ENCODE measurements at regions of chrX and their contacts with region 1.

Region 1: DNA sequence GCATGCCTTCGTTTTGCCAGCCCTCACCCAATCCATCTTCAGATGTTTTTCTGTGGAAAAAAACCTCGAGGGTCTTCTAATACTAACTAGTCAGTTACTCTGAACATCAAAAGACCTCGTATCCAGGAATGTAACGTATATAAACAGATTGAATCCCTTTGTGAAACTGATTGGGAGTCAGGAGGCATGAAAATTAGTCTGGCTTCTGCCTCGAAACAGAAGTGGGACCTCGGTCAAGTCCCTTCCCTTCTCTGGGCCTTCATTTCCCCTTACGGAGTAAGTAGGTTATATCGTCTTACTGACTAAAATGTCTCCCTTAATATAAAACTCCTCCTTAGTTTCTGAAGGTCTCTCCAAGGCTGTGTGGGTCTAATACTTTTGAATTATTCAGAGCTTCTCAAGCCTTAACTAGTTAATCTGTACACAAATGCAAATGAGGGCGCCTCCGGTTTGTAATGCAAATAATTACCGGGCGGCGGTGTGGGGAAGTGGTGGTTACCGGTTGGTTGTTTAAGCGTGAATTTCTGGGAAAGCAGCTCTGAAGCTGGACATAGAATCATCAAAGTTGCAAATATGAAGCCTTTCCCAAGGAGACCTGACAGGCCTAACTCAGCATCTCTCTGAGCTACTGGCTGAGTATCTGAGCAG is 11.4 kb upstream of the NKRF start:
- DNase-seq: no peak
- ATAC-seq: peak; percentile 76
- H3K4me3 ChIP-seq: peak overlapping the region; percentile 29; the same call in 1 of the 2 replicates
- H3K27ac ChIP-seq: peak overlapping the region; percentile 54
- H3K4me1 ChIP-seq: peaks cover 30% of the 10 kb centered on the region
- H3K27me3 ChIP-seq: no peaks in the 10 kb centered on the region
- CTCF ChIP-seq: no peak
- EP300 ChIP-seq: no peak
- POLR2A ChIP-seq: 0 out of 2 replicates have a peak, but pooled peaks have one; percentile 4
- RAD21 ChIP-seq: no peak

Region 2: GRCh38 chrX:119638725-119639471 is 21.3 kb after region 1 on chrX:
- CTCF ChIA-PET with region 1: interaction called, 20 read pairs
- POLR2A ChIA-PET with region 1: interaction called, 6 read pairs
- RAD21 ChIA-PET with region 1: interaction called, 99 read pairs
- SMC1A ChIA-PET with region 1: interaction called, 37 read pairs
- in situ Hi-C with region 1: no loop called
- intact Hi-C with region 1: loop called (anchors 2 kb)
- DNase-seq: peak; percentile 81
- ATAC-seq: peak; percentile 84
- H3K4me3 ChIP-seq: no peak overlapping the region
- H3K27ac ChIP-seq: peak overlapping the region; percentile 67
- H3K4me1 ChIP-seq: peaks cover 61% of the 10 kb centered on the region
- H3K27me3 ChIP-seq: no peaks in the 10 kb centered on the region
- CTCF ChIP-seq: 0 out of 6 replicates have a peak, but pooled peaks of 1 of the 3 experiments have one; percentile 10
- EP300 ChIP-seq: no peak
- POLR2A ChIP-seq: no peak
- RAD21 ChIP-seq: no peak

Region 3: GRCh38 chrX:119669424-119670037 is 51.9 kb after region 1 on chrX:
- CTCF ChIA-PET with region 1: interaction called, 4 read pairs
- POLR2A ChIA-PET with region 1: interaction called, 3 read pairs
- RAD21 ChIA-PET with region 1: interaction called, 5 read pairs
- SMC1A ChIA-PET with region 1: interaction called, 11 read pairs
- in situ Hi-C with region 1: no loop called
- intact Hi-C with region 1: no loop called
- DNase-seq: no peak
- ATAC-seq: no peak
- H3K4me3 ChIP-seq: no peak overlapping the region
- H3K27ac ChIP-seq: no peak overlapping the region
- H3K4me1 ChIP-seq: peaks cover 25% of the 10 kb centered on the region
- H3K27me3 ChIP-seq: no peaks in the 10 kb centered on the region
- CTCF ChIP-seq: no peak
- EP300 ChIP-seq: no peak
- POLR2A ChIP-seq: no peak
- RAD21 ChIP-seq: no peak

Region 4: DNA sequence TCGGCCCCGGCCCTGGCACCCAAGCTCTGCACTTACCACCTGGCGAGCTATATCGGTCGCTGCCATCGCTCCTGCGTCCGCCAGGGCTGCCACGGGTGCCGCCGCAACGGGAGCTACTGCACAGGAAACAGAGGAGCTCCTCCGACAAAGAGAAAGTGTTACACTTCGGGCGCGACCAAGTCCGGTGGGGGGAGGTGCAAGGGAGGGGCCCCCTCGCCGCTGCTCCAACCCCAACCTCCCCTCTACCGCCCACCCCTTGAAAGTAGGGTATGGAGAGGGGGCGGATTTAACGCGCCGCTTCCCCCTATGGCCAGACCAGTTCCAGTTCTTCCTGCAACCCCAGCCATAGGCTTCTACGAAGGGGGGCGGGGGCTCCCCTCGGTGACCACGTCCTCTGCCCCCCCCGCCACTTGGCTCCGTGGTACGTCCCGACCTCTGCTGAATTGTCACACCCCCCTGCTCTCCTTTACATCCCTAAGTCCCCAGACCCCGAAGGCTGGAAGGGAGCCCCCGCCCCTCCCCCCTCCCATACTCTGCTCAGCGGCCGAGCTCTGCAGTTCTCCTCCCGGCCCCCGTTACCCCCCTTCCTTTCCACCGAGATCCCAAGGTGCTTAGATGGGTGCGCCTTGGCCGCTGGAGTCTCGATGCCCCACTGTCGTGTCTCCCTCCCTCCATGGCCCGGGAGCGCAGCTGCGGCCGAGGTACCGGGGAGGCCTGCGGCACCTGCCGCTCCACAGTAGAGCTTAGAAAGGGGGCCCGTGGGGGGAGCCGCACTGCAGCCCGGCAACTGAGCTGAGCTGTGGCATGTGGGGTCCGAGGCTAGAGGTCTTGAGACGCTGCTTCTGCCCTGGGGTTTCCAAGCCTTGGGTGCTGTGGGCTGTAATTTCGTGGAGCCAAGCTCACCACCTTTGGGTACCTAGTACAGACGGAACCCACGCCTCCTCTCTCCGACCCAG is 75.7 kb after region 1 on chrX and contains the start of gene SEPTIN6:
- CTCF ChIA-PET with region 1: interaction called, 7 read pairs
- POLR2A ChIA-PET with region 1: interaction called, 12 read pairs
- RAD21 ChIA-PET with region 1: interaction called, 31 read pairs
- SMC1A ChIA-PET with region 1: interaction called, 14 read pairs
- in situ Hi-C with region 1: no loop called
- intact Hi-C with region 1: loop called (anchors 5 kb)
- DNase-seq: no peak
- ATAC-seq: peak; percentile 71
- H3K4me3 ChIP-seq: peak within 1 kb of the TSS; percentile 82
- H3K27ac ChIP-seq: peak within 1 kb of the TSS; percentile 83
- H3K4me1 ChIP-seq: peaks cover 24% of the 10 kb centered on the region
- H3K27me3 ChIP-seq: no peaks in the 10 kb centered on the region
- CTCF ChIP-seq: no peak
- EP300 ChIP-seq: no peak
- POLR2A ChIP-seq: peak; percentile 98
- RAD21 ChIP-seq: no peak
- polyA plus RNA-seq, gene SEPTIN6: 37.2 to 48.4 TPM

Region 5: GRCh38 chrX:120308959-120309872 is 691.6 kb after region 1 on chrX:
- CTCF ChIA-PET with region 1: no interaction called
- POLR2A ChIA-PET with region 1: no interaction called
- RAD21 ChIA-PET with region 1: no interaction called
- SMC1A ChIA-PET with region 1: no interaction called
- in situ Hi-C with region 1: no loop called
- intact Hi-C with region 1: no loop called
- DNase-seq: peak; percentile 47
- ATAC-seq: peak; percentile 95
- H3K4me3 ChIP-seq: peak overlapping the region; percentile 49
- H3K27ac ChIP-seq: no peak overlapping the region
- H3K4me1 ChIP-seq: no peaks in the 10 kb centered on the region; the same call in 1 of the 2 replicates
- H3K27me3 ChIP-seq: peaks cover 2 to 7% of the 10 kb centered on the region in 2 experiments; a peak in 3 of 4 replicates
- CTCF ChIP-seq: peak; percentile 70 to 72 (median 71)
- EP300 ChIP-seq: no peak
- POLR2A ChIP-seq: peak; percentile 74
- RAD21 ChIP-seq: peak; percentile 46

Measured in GM12878 (cell line).